Activated CD4-positive, alpha-beta memory T cell treated with anti-CD3 and anti-CD28 coated beads, Interleukin-2, amount 10 ng/mL, durations not matched to agents 7 days and 5 days (primary cell): ENCODE measurements at regions of chr13 and their contacts with region 1.

Region 1: GRCh38 chr13:45367358-45367757 is 26.4 kb upstream of the TPT1 start:
- DNase-seq: peak; percentile 93
- H3K4me3 Mint-ChIP-seq: peak overlapping the region; percentile 22
- H3K27ac Mint-ChIP-seq: peak overlapping the region; percentile 86
- H3K4me1 Mint-ChIP-seq: peaks cover 66% of the 10 kb centered on the region
- H3K27me3 Mint-ChIP-seq: no peaks in the 10 kb centered on the region

Region 2: DNA sequence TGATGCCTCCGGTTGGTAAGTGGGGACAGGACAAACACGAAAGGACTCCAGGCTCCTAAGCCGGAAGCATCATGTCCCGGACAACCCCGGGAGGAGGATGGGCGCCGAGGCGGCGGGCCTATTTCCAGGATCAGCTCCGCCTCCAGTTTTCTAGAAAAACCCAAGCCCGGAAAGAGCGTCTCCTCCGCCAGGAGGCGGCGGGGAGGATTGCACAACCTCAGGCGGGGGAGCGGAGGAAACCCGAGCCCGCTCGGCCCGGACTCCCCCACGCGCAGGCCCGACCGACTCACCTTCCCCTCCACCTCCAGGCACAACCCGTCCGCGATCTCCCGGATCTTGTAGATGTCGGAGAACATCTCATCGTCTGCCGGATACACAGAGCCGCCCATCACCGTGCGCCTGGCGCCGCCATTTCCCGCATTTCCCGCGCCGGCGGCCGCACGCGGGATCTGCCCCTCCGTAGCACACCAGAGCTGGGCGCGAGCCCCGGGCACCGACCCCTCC is 26.9 kb before region 1 on chr13:
- CTCF ChIA-PET with region 1: interaction called, 58 read pairs
- POLR2A ChIA-PET with region 1: interaction called, 81 read pairs
- DNase-seq: peak; percentile 87
- H3K4me3 Mint-ChIP-seq: peak overlapping the region; percentile 90
- H3K27ac Mint-ChIP-seq: peak overlapping the region; percentile 99
- H3K4me1 Mint-ChIP-seq: peaks cover 57% of the 10 kb centered on the region
- H3K27me3 Mint-ChIP-seq: no peaks in the 10 kb centered on the region

Region 3: DNA sequence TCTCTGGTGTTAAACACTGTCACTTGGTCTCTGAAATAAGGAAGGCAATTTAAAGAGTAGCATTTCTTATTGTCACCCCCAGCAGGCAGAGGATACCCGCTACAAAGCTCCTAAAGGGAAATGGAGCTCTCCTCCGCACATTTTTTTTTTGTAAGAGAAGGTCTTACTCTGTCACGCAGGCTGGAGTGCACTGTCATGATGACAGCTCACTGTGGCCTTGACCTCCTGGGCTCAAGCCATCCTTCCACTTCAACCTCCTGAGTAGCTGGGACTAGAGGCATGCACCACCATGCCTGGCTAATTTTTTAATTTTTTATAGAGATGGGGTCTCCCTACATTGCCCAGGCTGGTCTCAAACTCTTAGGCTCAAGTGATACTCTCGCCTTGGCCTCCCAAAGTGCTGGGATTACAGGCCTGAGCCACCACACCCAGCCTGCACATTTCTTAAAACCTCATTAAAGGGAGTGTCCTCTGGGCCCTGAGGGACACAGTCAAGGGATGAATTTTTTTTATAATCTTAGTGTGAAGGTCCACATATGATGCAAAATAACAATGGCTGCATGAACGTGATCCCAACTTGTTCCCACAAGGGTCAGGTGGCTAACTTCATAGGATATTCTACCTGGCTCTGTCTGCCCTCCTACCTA is 18.7 kb after region 1 on chr13:
- CTCF ChIA-PET with region 1: interaction called, 78 read pairs
- POLR2A ChIA-PET with region 1: no interaction called
- DNase-seq: no peak
- H3K4me3 Mint-ChIP-seq: no peak overlapping the region
- H3K27ac Mint-ChIP-seq: no peak overlapping the region
- H3K4me1 Mint-ChIP-seq: peaks cover 4% of the 10 kb centered on the region
- H3K27me3 Mint-ChIP-seq: no peaks in the 10 kb centered on the region

Region 4: DNA sequence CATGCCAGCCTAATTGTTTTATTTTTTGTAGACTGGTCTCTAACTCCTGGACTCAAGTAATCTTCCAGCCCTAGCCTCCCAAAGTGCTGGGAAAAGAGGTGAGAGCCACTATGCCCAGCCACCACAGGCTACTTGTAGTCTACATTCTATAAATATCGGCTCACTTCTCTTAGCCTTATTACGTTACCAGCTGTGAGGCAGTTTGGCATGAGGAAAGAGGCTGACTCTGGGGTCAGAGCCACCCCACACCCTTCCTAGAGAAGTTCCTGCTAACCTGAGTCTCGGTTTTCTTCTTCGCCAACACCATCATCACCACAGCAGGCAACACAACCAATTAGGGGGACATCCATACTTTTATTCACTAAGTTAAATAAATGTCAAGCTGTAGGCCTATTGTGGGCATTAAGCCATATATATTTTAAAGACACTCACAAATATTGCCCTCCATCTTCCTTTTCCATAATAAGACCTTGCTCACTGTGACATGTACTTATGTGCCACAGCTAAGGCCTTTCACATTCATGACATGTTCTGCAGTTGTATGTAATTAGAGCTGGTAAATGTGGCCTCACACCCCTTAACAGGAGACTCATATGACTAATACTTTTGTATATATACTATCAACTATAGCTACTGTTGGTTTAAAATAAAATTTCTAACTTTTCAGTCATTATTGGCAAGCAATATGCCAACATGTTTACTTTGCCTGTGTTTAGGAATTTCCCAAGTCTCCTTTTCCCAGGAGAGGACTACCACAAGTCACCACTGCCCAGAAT is 45.1 kb after region 1 on chr13:
- CTCF ChIA-PET with region 1: interaction called, 30 read pairs
- POLR2A ChIA-PET with region 1: interaction called, 23 read pairs
- DNase-seq: no peak
- H3K4me3 Mint-ChIP-seq: no peak overlapping the region
- H3K27ac Mint-ChIP-seq: no peak overlapping the region
- H3K4me1 Mint-ChIP-seq: peaks cover 24% of the 10 kb centered on the region
- H3K27me3 Mint-ChIP-seq: no peaks in the 10 kb centered on the region

Region 5: DNA sequence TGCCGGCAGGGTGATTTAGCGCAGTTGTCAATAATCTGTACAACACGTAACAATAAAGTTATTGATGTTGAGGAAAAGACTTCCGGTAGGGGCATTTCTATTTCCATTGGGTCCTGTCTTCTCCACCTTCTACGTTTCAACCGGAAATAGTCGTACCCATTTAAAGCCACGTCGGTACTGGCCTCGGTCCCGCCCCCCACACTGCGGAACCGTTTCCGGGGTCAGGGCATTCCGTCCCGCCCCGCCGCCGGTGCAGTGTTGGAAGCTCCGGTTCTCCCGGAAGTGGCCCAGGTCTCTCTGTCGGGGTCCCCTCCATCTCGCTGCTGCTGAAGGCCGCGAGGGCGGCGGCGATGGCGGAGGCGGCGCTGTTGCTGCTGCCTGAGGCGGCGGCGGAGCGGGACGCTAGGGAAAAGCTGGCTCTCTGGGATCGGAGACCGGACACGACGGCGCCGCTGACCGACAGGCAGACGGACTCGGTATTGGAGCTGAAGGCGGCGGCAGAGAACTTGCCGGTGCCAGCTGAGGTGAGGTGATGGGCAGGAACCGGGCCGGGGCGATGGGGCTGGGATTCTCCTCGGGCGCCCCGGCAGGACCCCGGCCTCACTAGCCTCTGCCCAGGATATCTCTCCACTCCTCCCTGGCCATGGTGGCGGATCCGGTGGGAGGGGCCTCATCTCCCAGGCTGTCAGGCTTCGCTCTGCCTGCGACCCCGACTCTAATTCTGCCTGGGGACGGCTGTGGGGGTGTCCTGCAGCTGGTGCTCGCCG is 97.5 kb after region 1 on chr13 and contains the start of gene COG3:
- CTCF ChIA-PET with region 1: interaction called, 7 read pairs
- POLR2A ChIA-PET with region 1: interaction called, 12 read pairs
- DNase-seq: peak; percentile 96
- H3K4me3 Mint-ChIP-seq: peak within 1 kb of the TSS; percentile 86
- H3K27ac Mint-ChIP-seq: peak within 1 kb of the TSS; percentile 86
- H3K4me1 Mint-ChIP-seq: peaks cover 44% of the 10 kb centered on the region
- H3K27me3 Mint-ChIP-seq: no peaks in the 10 kb centered on the region
- total RNA-seq, gene COG3: 24.6 to 26.5 TPM